ENCODE measurements at regions of chr12 and their contacts with region 1.

Region 1: DNA sequence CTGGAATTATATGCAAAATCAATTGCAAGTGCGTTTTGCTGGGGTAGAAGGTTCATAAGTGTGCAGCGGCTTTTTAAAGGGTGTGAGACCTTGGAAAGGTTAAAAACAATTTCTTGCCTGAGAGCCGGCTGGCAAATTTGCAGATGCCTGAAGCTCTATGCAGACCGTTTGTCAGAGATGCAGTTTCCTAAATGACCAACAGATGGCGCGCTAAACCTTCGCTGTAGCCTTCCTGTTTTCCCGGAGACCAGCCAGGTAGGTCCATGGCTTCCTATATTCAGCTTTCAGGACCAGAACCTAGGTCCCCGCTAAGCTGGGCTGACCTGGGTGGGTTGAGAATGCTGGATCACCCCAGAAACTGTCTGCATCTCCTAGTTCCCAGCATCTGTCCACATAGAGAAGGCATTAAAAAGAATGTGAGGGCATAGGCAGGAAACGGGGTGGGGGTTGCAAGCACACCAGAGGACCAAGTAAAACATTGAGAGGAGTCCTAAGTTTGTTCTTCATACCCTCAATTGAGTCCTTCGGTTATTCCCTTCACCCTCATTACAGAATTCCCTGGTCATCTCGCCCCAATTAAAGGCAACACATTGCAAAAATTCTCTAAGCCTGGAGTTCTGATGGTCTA is 5.7 kb upstream of the NOS1 start:
- DNase-seq: peak; percentile 63
- ATAC-seq: peak; percentile 87
- H3K4me3 ChIP-seq: no peak overlapping the region
- H3K27ac ChIP-seq: no peak overlapping the region
- H3K4me1 ChIP-seq: no peaks in the 10 kb centered on the region
- H3K27me3 ChIP-seq: peaks cover 4 to 13% of the 10 kb centered on the region in 2 experiments; a peak in 3 of 5 replicates
- CTCF ChIP-seq: peak; percentile 90
- EP300 ChIP-seq: no peak
- POLR2A ChIP-seq: no peak
- RAD21 ChIP-seq: peak; percentile 80

Region 2: GRCh38 chr12:117587631-117588287 is 220.6 kb after region 1 on chr12:
- CTCF ChIA-PET with region 1: interaction called, 63 read pairs
- POLR2A ChIA-PET with region 1: interaction called, 3 read pairs
- in situ Hi-C with region 1: loop called (anchors 5 kb)
- intact Hi-C with region 1: loop called (anchors 1 kb)
- DNase-seq: peak; percentile 15
- ATAC-seq: peak; percentile 82
- H3K4me3 ChIP-seq: no peak overlapping the region
- H3K27ac ChIP-seq: no peak overlapping the region
- H3K4me1 ChIP-seq: no peaks in the 10 kb centered on the region
- H3K27me3 ChIP-seq: peaks cover 0 to under 1% of the 10 kb centered on the region in 2 experiments; a peak in 2 of 5 replicates
- CTCF ChIP-seq: peak; percentile 80
- EP300 ChIP-seq: no peak
- POLR2A ChIP-seq: no peak
- RAD21 ChIP-seq: peak; percentile 68

Region 3: GRCh38 chr12:117671734-117672133 is 304.6 kb after region 1 on chr12:
- CTCF ChIA-PET with region 1: interaction called, 9 read pairs
- POLR2A ChIA-PET with region 1: no interaction called
- in situ Hi-C with region 1: loop called (anchors 10 kb)
- intact Hi-C with region 1: no loop called
- DNase-seq: peak; percentile 5
- ATAC-seq: no peak; the same call in 2 of the 3 replicates
- H3K4me3 ChIP-seq: no peak overlapping the region
- H3K27ac ChIP-seq: no peak overlapping the region
- H3K4me1 ChIP-seq: no peaks in the 10 kb centered on the region
- H3K27me3 ChIP-seq: peaks cover 3 to 9% of the 10 kb centered on the region in 2 experiments; a peak in 2 of 5 replicates
- CTCF ChIP-seq: peak; percentile 57
- EP300 ChIP-seq: no peak
- POLR2A ChIP-seq: no peak
- RAD21 ChIP-seq: no peak